H1 (cell line): ENCODE measurements at regions of chr7 and their contacts with region 1.

Region 1: DNA sequence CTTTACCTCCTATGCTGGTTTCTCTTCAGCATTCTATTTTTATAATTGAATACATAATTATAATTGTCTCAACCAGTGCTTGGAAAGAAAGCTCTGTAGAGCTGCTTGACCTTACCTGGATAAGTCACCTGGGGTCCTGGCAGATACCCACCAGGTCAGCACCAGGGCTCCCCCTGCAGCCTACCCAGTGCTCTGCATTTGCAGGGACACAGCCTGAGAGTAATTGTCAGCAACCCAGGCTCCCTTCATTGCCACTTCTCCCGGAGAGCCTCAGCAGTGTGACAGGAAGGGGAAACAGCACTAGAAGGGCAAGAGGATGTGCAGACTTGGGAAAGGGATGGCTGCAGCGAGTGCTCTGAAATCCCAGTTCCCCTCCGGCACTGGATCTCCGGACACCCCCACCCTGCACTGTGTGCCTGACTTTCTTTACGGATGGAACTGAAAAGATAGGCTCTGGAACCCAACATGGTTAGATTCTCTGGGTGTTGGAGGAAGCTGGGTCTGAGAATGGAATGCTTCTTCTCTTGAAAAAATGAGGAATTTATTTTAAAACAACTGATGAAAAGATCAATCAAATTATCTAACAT is 11.4 kb upstream of the PAX4 start:
- DNase-seq: peak; percentile 80 to 94
- H3K4me3 ChIP-seq: peak overlapping the region in 3 of 4 experiments; percentile 10 to 39 (median 19); a peak in 3 of 8 replicates
- H3K27ac ChIP-seq: no peak overlapping the region
- H3K4me1 ChIP-seq: peaks cover 0 to 6% (median 2%) of the 10 kb centered on the region in 4 experiments; a peak in 4 of 7 replicates
- H3K27me3 ChIP-seq: no peaks in the 10 kb centered on the region; a peak in 2 of 7 replicates
- CTCF ChIP-seq: peak; percentile 94 to 97 (median 95)
- EP300 ChIP-seq: no peak
- POLR2A ChIP-seq: no peak
- RAD21 ChIP-seq: peak; percentile 86 to 87

Region 2: DNA sequence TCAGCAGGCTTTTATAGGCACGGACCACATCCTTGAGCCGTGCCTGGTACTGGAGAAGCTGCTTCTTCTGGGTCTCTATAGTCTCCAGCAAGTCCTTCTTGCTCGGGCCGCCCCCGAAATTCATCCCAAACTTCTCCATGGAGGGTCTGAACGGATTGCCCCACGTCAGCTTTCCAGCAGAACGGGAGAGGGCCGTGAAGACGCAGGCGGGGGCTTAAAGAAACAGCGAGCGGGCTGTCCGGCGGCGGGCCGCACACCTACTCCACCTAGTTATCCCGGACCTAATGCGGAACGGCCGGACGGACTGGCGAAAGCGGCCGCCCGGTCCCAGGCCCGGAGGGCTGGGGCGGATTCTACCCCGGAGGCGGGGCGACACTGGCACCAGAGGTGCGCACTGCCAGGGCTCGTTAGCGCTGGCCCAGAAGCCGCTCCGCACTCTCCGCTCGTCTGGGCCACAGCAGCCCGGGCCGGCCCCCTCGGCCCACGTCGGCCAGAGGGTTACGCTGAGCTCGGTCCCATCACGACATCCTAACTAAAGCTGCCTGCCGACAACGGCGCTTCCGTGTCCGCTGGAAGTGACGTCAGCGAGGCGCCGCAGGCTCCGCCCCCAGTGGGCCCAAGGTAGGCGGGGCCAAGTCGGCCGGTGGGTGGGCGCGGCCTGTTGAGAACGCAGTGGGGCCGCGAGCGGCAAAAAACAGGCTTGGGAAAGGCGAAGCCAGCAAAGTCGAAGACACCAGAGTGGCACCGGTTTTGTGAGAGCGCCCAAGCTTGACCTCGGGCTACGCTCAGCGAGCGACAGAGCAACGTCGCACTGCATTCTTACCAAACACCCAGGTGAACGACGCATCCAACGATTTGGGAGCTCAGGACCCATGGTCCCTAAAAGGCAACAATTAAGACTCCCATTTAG is 44.1 kb before region 1 on chr7 and contains the start of gene GCC1:
- CTCF ChIA-PET with region 1: interaction called, 55 read pairs
- POLR2A ChIA-PET with region 1: interaction called, 3 read pairs
- DNase-seq: peak; percentile 66 to 100
- H3K4me3 ChIP-seq: peak within 1 kb of the TSS; percentile 80 to 95 (median 90)
- H3K27ac ChIP-seq: peak within 1 kb of the TSS; percentile 51; the same call in 1 of the 2 replicates
- H3K4me1 ChIP-seq: peaks cover 6 to 18% (median 8%) of the 10 kb centered on the region in 4 experiments
- H3K27me3 ChIP-seq: peaks cover 5 to 23% (median 22%) of the 10 kb centered on the region in 4 experiments
- CTCF ChIP-seq: no peak
- EP300 ChIP-seq: no peak; a peak in 1 of 3 replicates
- POLR2A ChIP-seq: peak in 1 of 2 experiments; percentile 92; a peak in 2 of 3 replicates
- RAD21 ChIP-seq: no peak
- total RNA-seq, gene GCC1: 14.7 and 15.0 TPM in 2 replicates

Region 3: DNA sequence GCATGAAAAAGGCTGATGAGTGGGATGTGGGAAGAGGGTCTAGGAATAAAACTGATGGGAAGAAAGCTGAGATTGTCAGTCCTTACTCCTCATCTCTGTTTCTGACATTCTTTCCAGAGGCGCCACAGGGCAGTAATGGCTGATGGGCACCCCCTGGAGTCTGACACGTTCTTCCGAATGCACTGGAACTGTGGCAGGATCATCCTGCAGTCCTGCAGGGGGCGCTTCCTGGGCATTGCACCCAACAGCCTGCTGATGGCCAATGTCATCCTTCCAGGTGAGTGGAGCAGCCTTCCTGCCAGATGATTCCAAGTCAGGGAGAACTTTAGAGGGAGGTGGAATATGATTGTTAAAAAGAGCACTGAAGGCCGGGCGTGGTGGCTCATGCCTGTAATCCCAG is 31.0 kb before region 1 on chr7:
- CTCF ChIA-PET with region 1: interaction called, 55 read pairs
- POLR2A ChIA-PET with region 1: no interaction called
- DNase-seq: peak in 1 of 2 experiments; percentile 86
- H3K4me3 ChIP-seq: no peak overlapping the region
- H3K27ac ChIP-seq: no peak overlapping the region
- H3K4me1 ChIP-seq: peaks cover 0 to 3% (median 1%) of the 10 kb centered on the region in 4 experiments; a peak in 2 of 7 replicates
- H3K27me3 ChIP-seq: no peaks in the 10 kb centered on the region; a peak in 2 of 7 replicates
- CTCF ChIP-seq: peak; percentile 94 to 97 (median 96)
- EP300 ChIP-seq: peak in 1 of 2 experiments; percentile 6; a peak in 1 of 3 replicates
- POLR2A ChIP-seq: no peak
- RAD21 ChIP-seq: peak; percentile 70 to 71

Region 4: DNA sequence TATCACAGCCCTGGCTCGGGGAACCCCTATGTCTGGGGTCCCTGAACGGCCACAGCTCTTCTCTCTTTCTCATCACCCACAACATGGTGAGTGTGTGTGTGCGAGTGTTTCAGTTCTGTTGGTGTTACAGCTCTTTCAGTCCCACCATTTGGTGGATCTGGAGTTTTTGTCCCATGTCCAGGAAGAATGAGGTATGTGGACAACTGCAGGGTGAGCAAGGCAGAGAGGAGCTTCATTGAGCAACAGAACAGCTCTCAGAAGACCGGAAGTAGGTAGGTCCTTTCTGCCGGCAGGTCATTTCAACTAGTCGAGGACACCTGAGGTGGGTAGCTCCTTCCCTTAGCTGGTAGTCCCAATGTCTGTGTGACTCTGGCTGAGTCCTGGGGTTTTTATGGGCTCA is 20.9 kb before region 1 on chr7:
- CTCF ChIA-PET with region 1: interaction called, 115 read pairs
- POLR2A ChIA-PET with region 1: no interaction called
- DNase-seq: no peak
- H3K4me3 ChIP-seq: no peak overlapping the region
- H3K27ac ChIP-seq: no peak overlapping the region
- H3K4me1 ChIP-seq: no peaks in the 10 kb centered on the region
- H3K27me3 ChIP-seq: peaks cover 0 to 2% (median 0%) of the 10 kb centered on the region in 4 experiments; a peak in 1 of 7 replicates
- CTCF ChIP-seq: no peak
- EP300 ChIP-seq: no peak
- POLR2A ChIP-seq: no peak
- RAD21 ChIP-seq: no peak

Region 5: DNA sequence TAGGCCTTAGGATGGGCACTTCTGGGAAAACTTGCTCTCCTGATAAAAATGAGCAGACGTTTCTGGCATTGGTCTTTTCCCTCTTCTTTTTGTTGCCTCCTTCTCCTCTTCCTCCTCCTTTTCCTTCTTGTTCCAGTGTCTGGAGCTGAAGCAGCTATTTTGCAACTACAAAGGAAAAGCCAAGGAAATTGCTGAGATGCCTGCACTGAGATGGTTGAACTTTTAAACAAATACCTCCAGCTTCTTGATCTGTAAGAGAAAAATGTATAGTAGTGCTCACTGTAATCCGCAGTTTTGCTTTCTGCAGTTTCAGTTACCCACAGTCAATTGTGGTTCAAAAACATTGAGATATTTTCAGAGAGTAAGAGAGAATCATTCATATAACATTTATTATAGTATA is 15.1 kb after region 1 on chr7:
- CTCF ChIA-PET with region 1: interaction called, 71 read pairs
- POLR2A ChIA-PET with region 1: interaction called, 4 read pairs
- DNase-seq: no peak
- H3K4me3 ChIP-seq: no peak overlapping the region
- H3K27ac ChIP-seq: no peak overlapping the region
- H3K4me1 ChIP-seq: no peaks in the 10 kb centered on the region
- H3K27me3 ChIP-seq: no peaks in the 10 kb centered on the region
- CTCF ChIP-seq: no peak
- EP300 ChIP-seq: no peak
- POLR2A ChIP-seq: no peak
- RAD21 ChIP-seq: no peak

Region 6: DNA sequence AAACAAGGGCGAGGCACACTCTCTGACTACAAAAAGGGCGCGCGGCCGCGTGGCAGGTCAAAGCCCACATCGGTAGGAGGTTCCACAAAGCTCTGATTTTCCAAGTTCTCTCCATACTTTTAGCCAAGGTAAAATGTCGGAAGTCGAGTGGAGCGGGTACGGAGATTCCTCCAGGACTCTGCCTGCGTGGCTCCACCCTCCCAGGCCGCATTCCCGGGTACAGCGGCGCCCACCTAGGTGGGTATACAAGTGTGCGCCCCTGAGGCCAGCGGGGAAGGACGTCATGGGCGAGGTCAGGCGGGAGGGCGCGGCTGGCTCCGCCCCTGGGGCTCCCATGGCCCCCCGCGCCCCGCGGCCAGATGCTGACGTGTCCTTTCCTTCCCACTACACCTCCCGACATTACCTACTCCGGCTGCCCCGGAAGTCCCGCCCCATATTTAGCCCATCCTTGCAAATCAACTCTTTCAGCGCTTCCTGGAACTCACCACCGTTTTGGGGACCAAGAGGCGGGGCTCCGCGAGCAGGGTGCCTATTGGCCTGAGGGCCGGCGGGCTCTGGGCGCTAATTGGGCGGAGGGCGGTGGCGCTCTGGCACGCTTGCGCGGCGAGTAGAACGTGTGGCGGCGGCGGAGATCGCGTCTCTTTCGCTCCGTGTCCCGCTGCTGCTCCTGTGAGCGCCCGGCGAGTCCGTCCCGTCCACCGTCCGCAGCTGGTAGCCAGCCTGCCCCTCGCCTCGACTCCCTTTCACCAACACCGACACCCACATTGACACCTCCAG is 22.4 kb after region 1 on chr7 and contains the start of gene SND1:
- CTCF ChIA-PET with region 1: interaction called, 19 read pairs
- POLR2A ChIA-PET with region 1: interaction called, 8 read pairs
- DNase-seq: peak; percentile 96 to 98
- H3K4me3 ChIP-seq: peak within 1 kb of the TSS; percentile 87 to 99 (median 93)
- H3K27ac ChIP-seq: peak within 1 kb of the TSS; percentile 98
- H3K4me1 ChIP-seq: peaks cover 5 to 15% (median 8%) of the 10 kb centered on the region in 4 experiments; a peak in 6 of 7 replicates
- H3K27me3 ChIP-seq: no peaks in the 10 kb centered on the region
- CTCF ChIP-seq: no peak
- EP300 ChIP-seq: no peak
- POLR2A ChIP-seq: peak; percentile 92 to 95
- RAD21 ChIP-seq: no peak
- total RNA-seq, gene SND1: 259 and 290 TPM in 2 replicates

Region 7: DNA sequence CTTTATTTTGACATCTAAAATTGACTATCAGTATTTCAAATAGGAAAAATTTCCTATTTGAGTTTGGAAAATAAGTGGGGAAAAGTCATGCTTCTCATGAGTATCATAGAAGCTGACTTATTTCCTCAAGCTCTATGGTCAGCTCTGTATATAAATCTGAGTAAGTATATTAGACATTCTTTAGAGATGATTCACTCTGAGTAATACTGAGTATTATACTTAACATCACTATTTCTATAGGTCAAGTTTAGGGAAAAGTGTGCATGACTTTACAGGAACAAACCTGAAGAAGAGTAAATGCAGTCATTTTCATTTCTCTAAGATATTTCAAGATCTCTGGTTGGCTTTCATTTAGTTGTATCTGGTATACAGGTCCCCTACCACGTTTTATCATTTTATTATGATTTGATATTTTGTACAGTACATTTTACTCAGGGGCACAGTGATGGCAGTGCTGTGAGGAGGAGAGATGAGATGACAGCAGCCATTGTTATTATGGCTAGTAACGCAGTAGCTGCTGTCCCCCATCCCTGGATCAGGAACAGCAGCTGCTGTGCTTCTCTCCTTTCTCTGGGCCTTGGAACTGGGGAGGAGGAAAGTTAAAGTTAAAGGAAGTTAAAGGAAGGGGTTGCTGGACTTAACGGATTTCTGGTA is 37.8 kb after region 1 on chr7:
- CTCF ChIA-PET with region 1: interaction called, 10 read pairs
- POLR2A ChIA-PET with region 1: no interaction called
- DNase-seq: no peak
- H3K4me3 ChIP-seq: no peak overlapping the region
- H3K27ac ChIP-seq: no peak overlapping the region
- H3K4me1 ChIP-seq: peaks cover 0 to 15% (median 7%) of the 10 kb centered on the region in 4 experiments; a peak in 5 of 7 replicates
- H3K27me3 ChIP-seq: no peaks in the 10 kb centered on the region
- CTCF ChIP-seq: no peak
- EP300 ChIP-seq: no peak
- POLR2A ChIP-seq: no peak
- RAD21 ChIP-seq: no peak